PC-9 (cell line): ENCODE measurements at regions of chr3 and their contacts with region 1.

Region 1: GRCh38 chr3:59341459-59341858 is 291.6 kb upstream of the CFAP20DC start:
- DNase-seq: no peak
- H3K4me3 ChIP-seq: no peak overlapping the region
- H3K27ac ChIP-seq: no peak overlapping the region
- H3K4me1 ChIP-seq: no peaks in the 10 kb centered on the region
- H3K27me3 ChIP-seq: no peaks in the 10 kb centered on the region
- CTCF ChIP-seq: no peak

Region 2: DNA sequence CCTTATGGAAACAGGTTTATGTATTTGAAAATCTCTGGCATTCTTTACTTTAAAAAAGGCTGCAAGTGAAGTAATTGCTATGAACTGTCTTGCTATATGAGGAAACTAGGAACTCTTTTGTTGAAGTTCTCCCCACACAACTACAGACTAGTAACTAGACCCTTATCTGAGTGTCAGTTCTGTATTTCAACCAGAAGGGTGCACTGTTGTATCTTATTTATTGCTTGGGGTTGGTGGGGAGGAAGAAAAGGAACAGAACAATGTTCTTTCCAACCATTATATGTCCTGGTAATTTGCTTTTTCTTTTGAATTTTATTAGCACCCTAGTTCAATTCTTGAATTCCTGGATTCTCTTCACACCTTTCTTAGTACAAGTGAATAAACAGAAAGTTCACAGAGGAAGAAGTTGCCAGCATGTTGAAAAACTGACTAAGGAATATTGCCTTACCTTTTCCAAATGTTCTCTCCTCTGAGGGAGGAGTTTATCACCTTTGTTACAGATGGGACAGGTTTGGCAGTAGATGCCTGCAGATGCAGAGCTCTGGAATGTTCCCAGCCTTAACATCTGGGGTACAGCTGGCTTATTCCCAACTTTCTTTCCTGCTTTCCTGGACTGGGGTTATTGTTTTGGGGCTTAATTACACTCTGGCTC is 129.2 kb before region 1 on chr3:
- CTCF ChIA-PET with region 1: no interaction called
- POLR2A ChIA-PET with region 1: no interaction called
- intact Hi-C with region 1: no loop called
- DNase-seq: peak in 1 of 2 experiments; percentile 46
- H3K4me3 ChIP-seq: no peak overlapping the region
- H3K27ac ChIP-seq: no peak overlapping the region
- H3K4me1 ChIP-seq: no peaks in the 10 kb centered on the region
- H3K27me3 ChIP-seq: no peaks in the 10 kb centered on the region
- CTCF ChIP-seq: peak; percentile 80

Region 3: DNA sequence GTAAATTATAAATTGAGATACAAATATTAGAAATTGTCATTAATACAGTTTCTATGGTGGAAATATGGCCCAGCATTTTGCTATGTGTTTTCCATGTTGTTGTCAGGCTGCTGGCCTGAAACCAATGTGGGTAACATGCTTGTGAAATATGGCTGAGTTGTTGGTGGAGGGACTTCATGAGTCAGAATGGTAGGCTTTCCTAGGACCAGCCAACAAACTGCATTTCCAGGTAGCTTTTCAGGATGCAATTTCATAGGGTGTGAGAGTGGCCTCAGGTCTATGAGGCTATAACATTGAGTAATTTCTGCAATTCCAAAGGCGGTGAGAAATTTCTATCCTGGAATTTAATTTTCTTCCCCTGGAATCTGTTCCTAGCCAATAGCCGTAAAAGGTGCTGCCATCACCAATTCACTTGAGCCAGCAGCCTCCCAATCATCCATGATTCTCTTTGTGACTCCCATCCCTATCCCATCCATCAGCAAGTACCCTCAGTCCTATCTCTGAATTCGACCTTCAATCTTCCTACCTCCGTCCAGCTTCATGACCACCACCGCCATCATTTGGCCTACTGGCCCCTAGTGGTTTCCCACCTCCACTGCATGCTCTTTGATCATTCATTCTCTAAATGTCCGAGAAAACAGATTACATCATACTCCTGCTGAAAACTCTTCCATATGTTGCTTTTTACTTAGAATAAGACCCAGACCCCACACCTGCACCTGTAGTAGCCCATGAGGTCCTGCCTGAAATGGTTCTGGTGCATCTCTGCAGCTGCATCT is 15.0 kb before region 1 on chr3:
- CTCF ChIA-PET with region 1: no interaction called
- POLR2A ChIA-PET with region 1: interaction called, 14 read pairs
- intact Hi-C with region 1: no loop called
- DNase-seq: no peak
- H3K4me3 ChIP-seq: no peak overlapping the region
- H3K27ac ChIP-seq: 0 out of 2 replicates have a peak overlapping the region, but pooled peaks have one; percentile 37
- H3K4me1 ChIP-seq: peaks cover 9% of the 10 kb centered on the region; the same call in 1 of the 2 replicates
- H3K27me3 ChIP-seq: no peaks in the 10 kb centered on the region
- CTCF ChIP-seq: no peak